Activated T-helper 2 cell treated with anti-CD3 and anti-CD28 coated beads, Interferon-gamma antibody, Interleukin-2, Interleukin-4, amounts not matched to agents 10 μg/mL and 5 μg/mL and 100 μg/mL, durations not matched to agents 14 hours and 24 hours and 36 hours (primary cell): ENCODE measurements at regions of chr6 and their contacts with region 1.

Region 1: GRCh38 chr6:144582939-144583613 is 297.9 kb downstream of the UTRN start:
- DNase-seq: peak; percentile 63
- H3K4me3 Mint-ChIP-seq: peak overlapping the region; percentile 81
- H3K27ac Mint-ChIP-seq: peak overlapping the region; percentile 93
- H3K4me1 Mint-ChIP-seq: peaks cover 66% of the 10 kb centered on the region
- H3K27me3 Mint-ChIP-seq: no peaks in the 10 kb centered on the region

Region 2: DNA sequence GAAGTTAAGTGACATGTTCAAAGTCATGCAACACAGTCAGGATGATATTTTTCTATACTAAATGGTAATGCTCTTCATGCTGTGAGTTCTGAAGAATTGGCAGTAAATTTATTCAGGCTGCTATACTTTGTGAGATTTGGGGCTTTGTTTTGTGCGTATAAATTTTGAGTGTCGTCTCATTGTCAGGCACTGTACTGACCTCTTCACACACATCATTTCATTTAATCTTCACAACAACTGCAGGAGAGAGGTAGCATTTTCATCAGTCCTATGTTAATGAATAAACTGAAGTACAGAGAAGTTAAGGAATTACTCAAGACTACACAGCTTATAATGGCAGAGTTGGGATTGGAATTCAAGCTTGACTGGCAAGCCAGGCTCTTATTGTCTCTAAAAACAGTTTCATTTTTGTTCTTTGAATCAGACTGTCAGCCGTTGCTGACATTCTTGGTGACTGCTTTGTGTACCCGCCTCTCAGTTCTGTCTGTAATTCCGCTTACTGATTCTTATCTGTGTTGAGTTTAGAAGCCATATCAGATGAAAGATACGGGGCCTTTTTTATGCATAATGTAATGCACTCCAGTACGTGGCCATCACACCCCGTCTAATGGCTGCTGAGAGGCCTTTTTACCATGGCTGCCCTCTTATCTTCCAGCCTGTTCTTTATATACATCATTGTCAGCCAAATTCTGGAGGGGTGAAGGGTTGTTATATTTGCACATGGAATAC is 23.0 kb before region 1 on chr6:
- intact Hi-C with region 1: loop called (anchors 1 kb)
- DNase-seq: peak; percentile 56
- H3K4me3 Mint-ChIP-seq: peak overlapping the region; percentile 60
- H3K27ac Mint-ChIP-seq: peak overlapping the region; percentile 86
- H3K4me1 Mint-ChIP-seq: peaks cover 36% of the 10 kb centered on the region
- H3K27me3 Mint-ChIP-seq: no peaks in the 10 kb centered on the region

Region 3: DNA sequence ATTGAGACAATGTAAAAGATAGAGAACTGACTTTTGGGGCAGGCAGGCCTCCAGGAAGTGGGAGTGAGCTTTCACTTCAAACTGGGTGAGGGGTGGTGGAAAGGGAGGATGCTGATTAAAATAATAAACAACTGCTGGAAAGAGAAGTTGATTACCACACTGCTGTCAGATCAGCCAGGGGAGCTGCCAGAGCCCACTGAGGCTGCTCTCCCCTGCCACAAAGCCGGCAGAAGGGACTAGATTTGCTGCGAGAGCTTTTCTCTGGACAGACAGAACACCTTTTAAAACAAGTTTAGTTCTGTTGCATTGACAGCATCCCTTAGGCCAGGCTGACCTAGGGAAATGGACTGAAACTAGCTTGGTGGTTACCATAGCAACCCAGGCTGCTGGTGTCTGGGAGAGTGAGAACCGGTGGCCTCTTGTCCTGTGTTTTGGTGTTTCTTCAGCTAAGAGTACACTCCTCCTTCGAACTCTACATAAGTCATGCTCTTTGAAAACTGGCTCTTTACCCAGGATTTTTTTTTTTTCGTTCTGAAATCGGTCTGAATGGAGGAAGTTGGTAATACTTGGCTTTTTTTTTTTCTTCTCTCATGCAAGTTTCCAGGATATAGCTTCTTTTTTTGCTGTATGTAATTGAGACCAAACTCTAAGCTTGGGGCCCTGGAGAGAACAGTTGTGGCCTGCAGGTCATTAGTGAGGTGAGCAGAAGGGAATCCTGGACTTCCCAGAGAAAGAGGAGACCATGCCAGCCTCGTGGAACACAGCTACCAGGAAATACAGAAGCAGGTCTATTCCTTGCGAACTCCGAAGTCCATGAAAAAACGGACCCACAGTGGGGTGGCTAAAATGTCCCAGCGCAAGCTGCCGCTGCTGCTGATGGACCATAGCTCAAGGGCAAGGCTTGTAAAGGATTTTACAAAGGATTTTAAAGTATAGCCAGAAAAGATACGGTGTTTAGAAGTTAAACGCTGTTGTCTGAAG is 76.4 kb after region 1 on chr6:
- intact Hi-C with region 1: loop called (anchors 5 kb)
- DNase-seq: no peak
- H3K4me3 Mint-ChIP-seq: peak overlapping the region; percentile 9
- H3K27ac Mint-ChIP-seq: peak overlapping the region; percentile 74
- H3K4me1 Mint-ChIP-seq: peaks cover 28% of the 10 kb centered on the region
- H3K27me3 Mint-ChIP-seq: no peaks in the 10 kb centered on the region

Region 4: DNA sequence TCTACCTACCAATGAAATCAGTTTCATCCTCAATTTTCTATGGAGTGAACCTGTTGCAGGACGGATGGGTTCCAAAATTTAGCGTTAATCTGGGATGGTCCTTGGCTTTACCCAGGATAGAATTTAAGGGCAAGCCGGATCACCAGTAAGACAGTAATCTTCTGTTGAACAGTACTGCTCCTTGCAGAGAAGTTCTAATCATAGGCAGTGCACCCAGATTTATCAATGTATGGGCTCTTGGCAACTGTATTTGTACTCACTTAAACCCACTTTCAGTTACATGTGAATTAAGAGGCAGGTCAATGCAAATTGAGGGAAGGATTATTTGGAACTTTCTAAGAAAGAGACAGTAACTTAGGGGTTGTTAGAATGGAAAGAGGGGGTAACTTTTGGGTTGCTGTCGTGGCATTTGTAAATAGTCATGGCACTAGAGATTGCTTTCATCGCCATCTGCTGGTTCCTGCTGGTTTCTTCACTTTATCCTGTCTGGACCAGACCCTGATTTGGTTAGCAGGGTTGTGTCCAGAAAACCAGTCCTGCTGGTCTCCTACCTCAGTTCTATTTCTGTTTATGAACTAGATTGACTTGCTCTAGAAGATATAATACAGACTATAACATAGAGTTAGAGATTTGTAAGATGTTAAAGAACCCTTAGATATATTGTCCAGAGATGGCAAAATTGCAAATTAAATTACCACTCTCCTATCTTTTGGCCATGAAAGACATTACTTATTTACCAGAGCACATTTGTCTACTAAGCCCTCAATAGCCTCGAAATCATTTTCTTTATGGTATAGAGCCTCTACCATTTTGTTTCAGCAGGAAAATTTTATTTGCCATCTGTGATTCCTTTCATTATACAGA is 348.3 kb after region 1 on chr6:
- intact Hi-C with region 1: loop called (anchors 1 kb)
- DNase-seq: no peak
- H3K4me3 Mint-ChIP-seq: no peak overlapping the region
- H3K27ac Mint-ChIP-seq: no peak overlapping the region
- H3K4me1 Mint-ChIP-seq: no peaks in the 10 kb centered on the region
- H3K27me3 Mint-ChIP-seq: peaks cover 2% of the 10 kb centered on the region

Region 5: GRCh38 chr6:145633981-145634627 is 1051.0 kb after region 1 on chr6:
- intact Hi-C with region 1: loop called (anchors 2 kb)
- DNase-seq: peak; percentile 56
- H3K4me3 Mint-ChIP-seq: no peak overlapping the region
- H3K27ac Mint-ChIP-seq: no peak overlapping the region
- H3K4me1 Mint-ChIP-seq: peaks cover 3% of the 10 kb centered on the region
- H3K27me3 Mint-ChIP-seq: no peaks in the 10 kb centered on the region